Esophagus muscularis mucosa (tissue), 4 donors: ENCODE measurements at regions of chr16 and their contacts with region 1.

Region 1: GRCh38 chr16:83952940-83953795 is at the start of gene OSGIN1:
- DNase-seq: peak; percentile 99
- H3K4me3 ChIP-seq: peak within 1 kb of the TSS; percentile 67 to 75 (median 67)
- H3K27ac ChIP-seq: peak within 1 kb of the TSS; percentile 93 to 97 (median 94)
- H3K4me1 ChIP-seq: peaks cover 31 to 50% (median 46%) of the 10 kb centered on the region in 4 donors
- H3K27me3 ChIP-seq: no peaks in the 10 kb centered on the region
- CTCF ChIP-seq: peak in 1 of 3 experiments; percentile 22
- EP300 ChIP-seq: peak; percentile 1
- POLR2A ChIP-seq: peak; percentile 93
- total RNA-seq, gene OSGIN1: 7.1 to 17.6 (median 13.8) TPM

Region 2: DNA sequence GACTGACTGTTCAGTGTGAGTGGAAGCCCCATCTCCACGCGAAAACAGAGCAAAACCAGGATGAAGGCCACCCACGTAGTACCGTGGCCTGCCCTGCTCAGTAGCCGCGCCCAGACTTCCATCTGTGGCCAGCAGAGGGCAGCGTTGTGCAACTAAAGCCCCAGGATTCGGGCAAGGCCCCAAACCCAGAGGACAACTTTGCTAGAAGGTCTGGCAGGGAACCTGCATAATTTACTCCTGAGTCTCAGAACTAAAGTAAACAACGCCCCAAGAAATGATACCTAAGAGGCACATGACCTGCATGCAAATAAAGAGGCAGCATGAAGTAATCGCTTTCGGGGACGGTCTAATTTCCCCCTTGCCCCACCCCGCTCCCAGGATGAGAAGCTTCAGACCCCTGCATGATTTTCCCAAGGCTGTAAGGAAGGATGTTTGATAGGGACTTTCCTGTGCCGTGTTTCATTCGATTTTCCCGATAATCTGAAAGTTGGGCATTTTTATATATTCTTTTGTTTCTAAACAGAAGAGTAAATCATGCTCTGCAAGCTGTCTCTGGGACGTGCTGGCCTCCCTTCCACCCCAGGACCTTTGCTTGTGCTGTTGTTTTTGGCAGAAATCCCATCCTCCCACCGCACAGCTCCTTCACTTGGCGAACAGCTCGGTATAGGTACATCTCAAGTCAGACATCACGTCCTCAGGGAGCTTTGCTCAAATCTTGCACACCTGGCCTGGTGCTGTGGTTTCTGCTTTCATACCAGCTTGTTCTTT is 126.8 kb before region 1 on chr16:
- intact Hi-C with region 1: loop called (anchors 10 kb)
- DNase-seq: peak; percentile 95
- H3K4me3 ChIP-seq: no peak overlapping the region
- H3K27ac ChIP-seq: no peak overlapping the region
- H3K4me1 ChIP-seq: peaks cover 0 to 11% (median 7%) of the 10 kb centered on the region in 4 donors
- H3K27me3 ChIP-seq: no peaks in the 10 kb centered on the region
- CTCF ChIP-seq: peak; percentile 90 to 95 (median 90)
- EP300 ChIP-seq: no peak
- POLR2A ChIP-seq: no peak

Region 3: GRCh38 chr16:83898463-83899271 is 54.5 kb before region 1 on chr16 and contains the start of gene MLYCD:
- intact Hi-C with region 1: loop called (anchors 5 kb)
- DNase-seq: peak; percentile 97
- H3K4me3 ChIP-seq: peak within 1 kb of the TSS; percentile 85 to 96 (median 90)
- H3K27ac ChIP-seq: peak within 1 kb of the TSS; percentile 92 to 99 (median 98)
- H3K4me1 ChIP-seq: peaks cover 31 to 51% (median 48%) of the 10 kb centered on the region in 4 donors
- H3K27me3 ChIP-seq: no peaks in the 10 kb centered on the region
- CTCF ChIP-seq: no peak
- EP300 ChIP-seq: peak; percentile 53
- POLR2A ChIP-seq: peak; percentile 1
- total RNA-seq, gene MLYCD: 9.6 to 15.8 (median 12.3) TPM

Region 4: DNA sequence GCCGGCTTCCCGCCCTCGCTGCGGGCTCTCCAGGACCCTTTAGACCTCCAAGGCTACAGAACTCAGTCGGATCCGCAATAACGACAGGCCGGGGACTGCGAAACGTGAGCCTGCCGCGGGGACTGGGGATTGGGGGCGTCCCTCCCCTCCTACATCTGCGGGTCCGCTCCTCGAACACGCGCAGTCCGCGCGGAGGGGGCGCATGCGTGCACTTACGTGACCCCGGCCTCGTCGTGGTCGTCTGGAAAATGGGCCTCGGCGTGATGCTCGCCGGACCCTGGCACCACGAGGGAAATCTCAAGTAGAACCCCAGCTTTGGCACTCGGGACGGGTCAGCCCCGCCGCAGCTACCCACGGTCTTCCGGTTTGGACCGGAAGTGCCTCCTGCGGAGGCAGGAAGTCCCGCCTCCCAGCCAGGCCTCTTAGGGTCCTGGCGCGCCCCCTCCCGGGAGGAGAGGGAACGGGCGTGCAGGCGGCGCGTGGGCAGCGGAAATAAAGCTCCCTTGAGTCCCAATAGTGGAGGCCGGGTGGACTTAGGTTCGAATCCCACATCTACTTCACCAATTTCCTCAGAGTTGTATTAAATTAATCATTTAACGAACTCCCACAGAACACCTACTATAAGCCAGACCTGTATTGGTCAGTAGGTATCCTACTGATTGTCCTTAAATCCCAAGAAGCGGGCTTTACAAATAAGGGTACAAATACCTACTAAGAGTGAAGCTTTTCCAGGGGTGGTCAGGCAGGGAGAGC is 233.7 kb after region 1 on chr16 and contains the start of gene TAF1C:
- intact Hi-C with region 1: loop called (anchors 10 kb)
- DNase-seq: peak; percentile 97
- H3K4me3 ChIP-seq: peak within 1 kb of the TSS; percentile 79 to 88 (median 84)
- H3K27ac ChIP-seq: peak within 1 kb of the TSS; percentile 73 to 80 (median 78)
- H3K4me1 ChIP-seq: peaks cover 15 to 38% (median 38%) of the 10 kb centered on the region in 4 donors
- H3K27me3 ChIP-seq: no peaks in the 10 kb centered on the region
- CTCF ChIP-seq: peak; percentile 99
- EP300 ChIP-seq: no peak
- POLR2A ChIP-seq: no peak
- total RNA-seq, gene TAF1C: 15.6 to 39.6 (median 21.8) TPM